Mammary epithelial cell (primary cell): ENCODE measurements at regions of chr2 and their contacts with region 1.

Region 1: GRCh38 chr2:130797493-130798435 is 39.0 kb upstream of the ARHGEF4 start:
- DNase-seq: peak; percentile 83
- H3K4me3 ChIP-seq: peak overlapping the region; percentile 60 to 76 (median 73)
- H3K27ac ChIP-seq: peak overlapping the region; percentile 63
- H3K4me1 ChIP-seq: peaks cover 18% of the 10 kb centered on the region
- H3K27me3 ChIP-seq: no peaks in the 10 kb centered on the region
- CTCF ChIP-seq: peak; percentile 78 to 95

Region 2: DNA sequence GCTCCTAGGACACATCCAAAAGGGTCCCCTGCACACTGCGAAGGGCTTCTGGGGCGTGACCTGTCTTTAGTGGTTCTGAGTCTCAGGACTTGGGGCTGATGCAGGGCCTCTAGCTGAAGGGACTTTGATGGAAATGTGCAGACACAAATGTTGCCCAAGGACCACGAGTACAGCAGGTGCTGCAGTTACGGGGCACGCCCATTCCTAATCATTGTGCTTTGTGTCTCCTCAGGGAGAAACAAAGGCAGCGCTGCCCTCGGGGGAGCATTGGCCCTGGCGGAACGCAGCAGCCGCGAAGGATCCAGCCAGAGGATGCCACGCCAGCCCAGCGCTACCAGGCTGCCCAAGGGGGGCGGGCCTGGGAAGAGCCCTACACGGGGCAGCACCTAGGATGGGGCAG is 607.5 kb before region 1 on chr2:
- CTCF ChIA-PET with region 1: no interaction called
- dilution Hi-C with region 1: no loop called
- in situ Hi-C with region 1: no loop called
- intact Hi-C with region 1: no loop called
- DNase-seq: no peak
- H3K4me3 ChIP-seq: no peak overlapping the region
- H3K27ac ChIP-seq: no peak overlapping the region
- H3K4me1 ChIP-seq: no peaks in the 10 kb centered on the region
- H3K27me3 ChIP-seq: no peaks in the 10 kb centered on the region
- CTCF ChIP-seq: no peak

Region 3: GRCh38 chr2:130744287-130745117 is 53.3 kb before region 1 on chr2:
- CTCF ChIA-PET with region 1: no interaction called
- dilution Hi-C with region 1: no loop called
- in situ Hi-C with region 1: no loop called
- intact Hi-C with region 1: no loop called
- DNase-seq: no peak
- H3K4me3 ChIP-seq: no peak overlapping the region
- H3K27ac ChIP-seq: no peak overlapping the region
- H3K4me1 ChIP-seq: no peaks in the 10 kb centered on the region
- H3K27me3 ChIP-seq: peaks cover 2% of the 10 kb centered on the region
- CTCF ChIP-seq: no peak

Region 4: DNA sequence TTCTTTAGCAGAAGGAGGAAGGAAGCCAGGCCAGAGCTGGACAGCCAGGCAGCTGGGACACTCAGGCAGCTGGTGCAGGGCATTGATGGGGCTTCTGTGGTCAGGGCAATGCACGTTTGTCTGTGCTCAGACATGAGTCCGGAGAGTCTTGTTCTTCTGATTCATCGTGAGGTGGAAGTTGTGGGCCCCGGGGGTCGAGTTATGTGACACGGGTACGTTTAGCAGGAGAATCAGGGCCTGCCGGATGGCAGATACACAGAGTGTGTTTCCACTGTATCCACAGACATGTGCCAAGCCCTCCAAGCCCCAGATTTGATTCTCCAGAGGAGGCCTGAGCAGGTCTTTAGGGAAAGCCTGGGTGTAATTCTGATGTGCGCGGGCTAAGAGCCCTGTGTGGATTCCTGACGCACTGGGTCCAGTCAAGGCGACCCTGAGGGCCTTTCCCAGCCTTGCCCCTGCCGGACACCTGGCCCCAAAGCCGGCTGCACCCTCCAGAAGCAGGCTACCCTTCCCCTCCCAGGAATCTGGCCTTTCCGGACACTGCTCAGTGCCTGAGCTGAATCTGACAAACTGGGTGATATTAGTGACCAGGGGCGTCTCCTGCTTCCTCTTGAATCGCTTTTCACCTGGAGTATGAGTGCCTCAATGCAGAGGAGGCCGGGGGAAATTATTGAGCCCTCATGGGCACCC is 49.1 kb after region 1 on chr2:
- CTCF ChIA-PET with region 1: no interaction called
- dilution Hi-C with region 1: no loop called
- in situ Hi-C with region 1: no loop called
- intact Hi-C with region 1: loop called (anchors 2 kb)
- DNase-seq: peak; percentile 81
- H3K4me3 ChIP-seq: no peak overlapping the region
- H3K27ac ChIP-seq: no peak overlapping the region
- H3K4me1 ChIP-seq: peaks cover 25% of the 10 kb centered on the region
- H3K27me3 ChIP-seq: no peaks in the 10 kb centered on the region
- CTCF ChIP-seq: no peak

Region 5: GRCh38 chr2:130873700-130874346 is 76.1 kb after region 1 on chr2:
- CTCF ChIA-PET with region 1: no interaction called
- dilution Hi-C with region 1: loop called (anchors 5 kb)
- in situ Hi-C with region 1: loop called (anchors 5 kb)
- intact Hi-C with region 1: loop called (anchors 1 kb)
- DNase-seq: peak; percentile 53
- H3K4me3 ChIP-seq: no peak overlapping the region
- H3K27ac ChIP-seq: no peak overlapping the region
- H3K4me1 ChIP-seq: peaks cover 18% of the 10 kb centered on the region
- H3K27me3 ChIP-seq: no peaks in the 10 kb centered on the region
- CTCF ChIP-seq: peak; percentile 77 to 81

Region 6: GRCh38 chr2:130920415-130921163 is 122.8 kb after region 1 on chr2:
- CTCF ChIA-PET with region 1: interaction called, 6 read pairs
- dilution Hi-C with region 1: no loop called
- in situ Hi-C with region 1: loop called in 1 of 2 experiments (anchors 10 kb)
- intact Hi-C with region 1: loop called (anchors 1 kb)
- DNase-seq: peak; percentile 61
- H3K4me3 ChIP-seq: no peak overlapping the region
- H3K27ac ChIP-seq: no peak overlapping the region
- H3K4me1 ChIP-seq: peaks cover 4% of the 10 kb centered on the region
- H3K27me3 ChIP-seq: no peaks in the 10 kb centered on the region
- CTCF ChIP-seq: peak; percentile 94 to 95

Region 7: GRCh38 chr2:131034122-131035051 is 236.6 kb after region 1 on chr2:
- CTCF ChIA-PET with region 1: no interaction called
- dilution Hi-C with region 1: no loop called
- in situ Hi-C with region 1: no loop called
- intact Hi-C with region 1: loop called (anchors 5 kb)
- DNase-seq: peak; percentile 19
- H3K4me3 ChIP-seq: peak overlapping the region in 2 of 3 experiments; percentile 34 to 44
- H3K27ac ChIP-seq: no peak overlapping the region
- H3K4me1 ChIP-seq: peaks cover 20% of the 10 kb centered on the region
- H3K27me3 ChIP-seq: no peaks in the 10 kb centered on the region
- CTCF ChIP-seq: no peak

Region 8: DNA sequence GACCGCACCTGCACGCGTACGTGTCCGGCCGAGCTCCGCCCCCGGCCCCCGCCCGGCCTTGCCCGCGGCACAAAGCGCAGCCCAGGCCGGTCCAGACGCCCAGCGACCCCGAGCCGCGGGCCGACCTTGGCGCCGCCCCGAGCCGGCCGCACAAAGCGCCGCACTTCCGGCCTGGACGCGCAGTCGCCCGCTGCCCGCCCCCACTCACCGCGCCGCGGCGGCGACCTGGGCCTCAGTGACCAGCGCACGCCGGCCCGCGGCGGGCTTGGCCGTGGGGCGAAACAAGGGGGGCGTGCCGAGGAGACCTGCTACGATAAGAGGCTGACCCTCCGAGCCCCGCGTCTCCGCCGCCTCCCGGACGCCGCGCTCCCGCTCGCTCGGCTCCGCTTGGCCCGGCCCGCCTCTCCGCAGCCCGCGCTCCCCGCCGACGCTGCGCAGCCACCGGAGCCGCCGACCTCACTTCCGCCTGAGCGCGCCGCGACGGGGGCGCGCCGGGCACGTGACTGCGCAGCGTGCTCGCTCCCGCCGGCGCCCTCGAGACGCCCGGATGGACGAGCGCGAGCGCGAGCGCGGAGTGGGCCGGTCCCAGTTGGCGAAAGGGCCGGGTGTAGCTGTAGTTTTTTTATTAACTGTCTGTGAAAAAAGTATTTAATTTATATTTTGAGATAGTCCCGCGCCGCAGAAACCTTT is 295.4 kb after region 1 on chr2 and contains the start of gene FAM168B:
- CTCF ChIA-PET with region 1: no interaction called
- dilution Hi-C with region 1: no loop called
- in situ Hi-C with region 1: loop called in 1 of 2 experiments (anchors 25 kb)
- intact Hi-C with region 1: no loop called
- DNase-seq: peak; percentile 90
- H3K4me3 ChIP-seq: peak within 1 kb of the TSS; percentile 76 to 100 (median 99)
- H3K27ac ChIP-seq: peak within 1 kb of the TSS; percentile 89
- H3K4me1 ChIP-seq: no peaks in the 10 kb centered on the region
- H3K27me3 ChIP-seq: no peaks in the 10 kb centered on the region
- CTCF ChIP-seq: no peak
- total RNA-seq, gene FAM168B: 89.5 to 108 TPM

Region 9: GRCh38 chr2:131148426-131148825 is 350.7 kb after region 1 on chr2:
- CTCF ChIA-PET with region 1: no interaction called
- dilution Hi-C with region 1: no loop called
- in situ Hi-C with region 1: no loop called
- intact Hi-C with region 1: loop called (anchors 2 kb)
- DNase-seq: no peak
- H3K4me3 ChIP-seq: no peak overlapping the region
- H3K27ac ChIP-seq: no peak overlapping the region
- H3K4me1 ChIP-seq: no peaks in the 10 kb centered on the region
- H3K27me3 ChIP-seq: no peaks in the 10 kb centered on the region
- CTCF ChIP-seq: no peak